SK-N-SH (cell line): ENCODE measurements at regions of chr5 and their contacts with region 1.

Region 1: GRCh38 chr5:32076699-32077695 is 97.1 kb downstream of the GOLPH3 start:
- DNase-seq: peak; percentile 61
- H3K4me3 ChIP-seq: no peak overlapping the region
- H3K27ac ChIP-seq: no peak overlapping the region
- H3K4me1 ChIP-seq: no peaks in the 10 kb centered on the region; a peak in 1 of 4 replicates
- H3K27me3 ChIP-seq: no peaks in the 10 kb centered on the region
- CTCF ChIP-seq: peak; percentile 93
- EP300 ChIP-seq: no peak
- RAD21 ChIP-seq: peak; percentile 96

Region 2: GRCh38 chr5:31819926-31820516 is 257.0 kb before region 1 on chr5:
- CTCF ChIA-PET with region 1: interaction called, 195 read pairs
- POLR2A ChIA-PET with region 1: interaction called, 5 read pairs
- DNase-seq: no peak
- H3K4me3 ChIP-seq: no peak overlapping the region
- H3K27ac ChIP-seq: no peak overlapping the region
- H3K4me1 ChIP-seq: peaks cover 0 to 3% of the 10 kb centered on the region in 2 experiments; a peak in 1 of 4 replicates
- H3K27me3 ChIP-seq: no peaks in the 10 kb centered on the region
- CTCF ChIP-seq: no peak
- EP300 ChIP-seq: no peak
- RAD21 ChIP-seq: no peak

Region 3: DNA sequence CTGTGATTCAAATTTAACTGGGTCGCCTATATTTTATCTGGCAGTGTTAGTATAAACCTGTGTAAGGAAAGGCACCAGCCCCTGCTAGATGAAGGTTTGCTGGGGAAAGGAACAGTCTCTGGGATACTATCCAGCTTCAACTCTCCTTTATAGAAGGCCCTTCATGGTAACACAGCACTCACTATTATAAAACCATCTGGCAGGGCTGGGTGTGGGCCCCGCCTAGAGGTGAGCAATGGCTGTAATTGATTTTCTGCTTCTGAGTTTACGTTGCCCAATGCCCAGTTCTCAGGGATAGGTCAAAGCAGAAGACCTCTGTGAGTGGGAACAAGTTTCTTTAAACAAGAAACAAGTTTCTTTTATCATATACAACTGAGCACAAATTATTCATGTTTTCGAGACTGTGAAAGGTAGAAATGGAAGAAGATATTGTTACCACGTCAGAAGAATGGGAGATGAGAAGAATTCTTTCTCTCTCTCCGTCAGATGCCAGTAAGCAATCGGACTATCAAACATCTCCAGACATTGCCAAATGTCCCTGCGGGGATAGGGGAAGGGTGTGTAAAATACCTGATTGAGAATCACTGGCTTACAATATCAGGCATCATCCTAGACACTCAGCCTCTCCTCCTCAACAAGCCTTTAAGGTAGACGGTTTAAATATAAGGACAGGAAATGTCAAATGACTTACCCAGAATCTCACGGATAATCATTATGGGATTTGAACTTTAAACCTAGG is 232.2 kb before region 1 on chr5:
- CTCF ChIA-PET with region 1: interaction called, 24 read pairs
- POLR2A ChIA-PET with region 1: no interaction called
- DNase-seq: no peak
- H3K4me3 ChIP-seq: no peak overlapping the region
- H3K27ac ChIP-seq: no peak overlapping the region
- H3K4me1 ChIP-seq: peaks cover 0 to 15% of the 10 kb centered on the region in 2 experiments; a peak in 2 of 4 replicates
- H3K27me3 ChIP-seq: no peaks in the 10 kb centered on the region; the same call in 1 of the 2 replicates
- CTCF ChIP-seq: no peak
- EP300 ChIP-seq: no peak
- RAD21 ChIP-seq: no peak

Region 4: GRCh38 chr5:31898036-31898632 is 178.9 kb before region 1 on chr5:
- CTCF ChIA-PET with region 1: interaction called, 13 read pairs
- POLR2A ChIA-PET with region 1: no interaction called
- DNase-seq: no peak
- H3K4me3 ChIP-seq: no peak overlapping the region
- H3K27ac ChIP-seq: no peak overlapping the region
- H3K4me1 ChIP-seq: no peaks in the 10 kb centered on the region
- H3K27me3 ChIP-seq: no peaks in the 10 kb centered on the region; the same call in 1 of the 2 replicates
- CTCF ChIP-seq: no peak
- EP300 ChIP-seq: no peak
- RAD21 ChIP-seq: no peak

Region 5: GRCh38 chr5:31948009-31948408 is 129.0 kb before region 1 on chr5:
- CTCF ChIA-PET with region 1: interaction called, 11 read pairs
- POLR2A ChIA-PET with region 1: interaction called, 3 read pairs
- DNase-seq: no peak
- H3K4me3 ChIP-seq: no peak overlapping the region
- H3K27ac ChIP-seq: peak overlapping the region in 1 of 2 experiments; percentile 67; a peak in 2 of 4 replicates
- H3K4me1 ChIP-seq: peaks cover 0 to 35% of the 10 kb centered on the region in 2 experiments; a peak in 2 of 4 replicates
- H3K27me3 ChIP-seq: peaks cover 17% of the 10 kb centered on the region; the same call in 1 of the 2 replicates
- CTCF ChIP-seq: no peak
- EP300 ChIP-seq: no peak
- RAD21 ChIP-seq: no peak

Region 6: GRCh38 chr5:32087086-32088082 is 10.4 kb after region 1 on chr5:
- CTCF ChIA-PET with region 1: interaction called, 24 read pairs
- POLR2A ChIA-PET with region 1: no interaction called
- DNase-seq: no peak
- H3K4me3 ChIP-seq: no peak overlapping the region
- H3K27ac ChIP-seq: no peak overlapping the region
- H3K4me1 ChIP-seq: no peaks in the 10 kb centered on the region
- H3K27me3 ChIP-seq: no peaks in the 10 kb centered on the region
- CTCF ChIP-seq: no peak
- EP300 ChIP-seq: no peak
- RAD21 ChIP-seq: no peak